Adrenal gland (tissue), 19 donors: ENCODE measurements at regions of chr4 and their contacts with region 1.

Region 1: GRCh38 chr4:25367004-25367621 is 9.9 kb upstream of the ANAPC4 start:
- DNase-seq: no peak
- H3K4me3 ChIP-seq: no peak overlapping the region
- H3K27ac ChIP-seq: peak overlapping the region in 1 of 5 donors; percentile 82
- H3K4me1 ChIP-seq: peaks cover 19 to 25% of the 10 kb centered on the region in 2 donors
- H3K27me3 ChIP-seq: no peaks in the 10 kb centered on the region
- CTCF ChIP-seq: peak; percentile 42 to 77 (median 68)
- POLR2A ChIP-seq: no peak

Region 2: DNA sequence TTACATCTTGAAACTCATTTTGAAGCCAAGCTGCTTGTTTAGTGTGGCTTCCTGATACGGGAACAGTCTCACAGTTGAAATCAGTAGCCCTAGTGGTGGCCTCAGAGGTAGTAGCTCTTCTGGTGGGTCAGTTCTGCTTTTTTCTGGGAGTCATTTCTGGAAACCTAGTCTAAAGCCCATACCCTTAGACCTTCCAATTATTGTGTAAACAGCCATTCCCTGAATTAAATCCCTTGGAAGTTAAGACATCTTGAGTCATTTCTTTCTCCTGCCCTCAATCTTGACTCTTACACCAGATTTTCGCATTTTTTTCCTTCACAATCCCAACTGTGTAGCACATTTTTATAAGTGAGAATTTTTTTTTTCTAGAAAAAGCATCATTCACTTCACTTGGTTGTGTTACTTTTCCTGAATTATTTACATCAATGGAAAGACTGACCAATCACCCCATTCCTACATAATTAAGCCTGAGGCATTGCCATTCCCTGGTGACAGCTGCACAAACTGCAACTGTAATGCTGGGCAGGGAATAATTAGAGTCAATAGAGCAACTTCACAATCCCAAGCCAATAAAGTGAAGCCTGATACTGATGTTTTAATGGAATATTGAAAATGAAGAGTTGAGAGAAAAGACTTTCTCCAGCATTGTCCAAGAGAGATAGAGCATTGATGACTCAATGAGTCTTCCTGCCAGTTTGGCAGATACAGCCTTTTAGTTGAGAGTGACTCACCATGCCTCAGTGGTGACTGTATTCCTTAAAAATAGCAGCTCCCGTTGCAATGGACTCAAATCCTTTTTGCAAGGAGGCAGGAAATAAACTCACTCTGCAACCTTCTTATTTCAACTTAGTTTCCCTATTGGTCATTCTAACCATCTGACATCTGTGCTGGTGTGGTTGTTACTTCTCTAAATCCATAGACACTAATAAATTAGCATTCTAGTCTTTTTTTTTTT is 193.9 kb before region 1 on chr4:
- intact Hi-C with region 1: loop called (anchors 10 kb)
- DNase-seq: peak; percentile 68 to 89 (median 80)
- H3K4me3 ChIP-seq: no peak overlapping the region
- H3K27ac ChIP-seq: peak overlapping the region in 4 of 5 donors; percentile 52 to 83 (median 60)
- H3K4me1 ChIP-seq: peaks cover 12 to 16% of the 10 kb centered on the region in 2 donors
- H3K27me3 ChIP-seq: no peaks in the 10 kb centered on the region
- CTCF ChIP-seq: peak in 3 of 6 experiments; percentile 5 to 22 (median 19)
- POLR2A ChIP-seq: no peak

Region 3: DNA sequence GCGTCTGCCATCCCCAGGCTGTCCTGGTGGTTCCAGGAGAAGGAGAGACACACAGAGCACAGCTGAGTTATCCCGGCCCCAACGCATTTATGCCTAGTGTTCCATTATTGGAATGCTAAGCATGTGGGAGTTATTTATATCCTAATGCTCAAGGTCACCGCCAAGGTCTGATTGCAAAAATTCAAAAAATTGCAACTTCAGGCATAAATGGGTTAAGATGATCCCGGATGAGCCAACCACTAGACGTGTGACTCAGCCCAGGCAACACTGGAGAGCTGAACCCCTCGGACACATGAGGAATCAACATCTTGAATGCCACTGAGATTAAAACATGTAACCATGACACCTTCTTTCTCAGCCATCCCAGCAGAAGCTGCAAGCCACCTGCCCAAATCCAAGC is 58.4 kb before region 1 on chr4:
- intact Hi-C with region 1: loop called in 1 of 2 experiments (anchors 5 kb)
- DNase-seq: no peak
- H3K4me3 ChIP-seq: no peak overlapping the region
- H3K27ac ChIP-seq: no peak overlapping the region
- H3K4me1 ChIP-seq: peaks cover 0 to 6% of the 10 kb centered on the region in 2 donors
- H3K27me3 ChIP-seq: no peaks in the 10 kb centered on the region
- CTCF ChIP-seq: no peak
- POLR2A ChIP-seq: no peak

Region 4: GRCh38 chr4:25509646-25510045 is 142.5 kb after region 1 on chr4:
- intact Hi-C with region 1: no loop called
- DNase-seq: no peak
- H3K4me3 ChIP-seq: no peak overlapping the region
- H3K27ac ChIP-seq: no peak overlapping the region
- H3K4me1 ChIP-seq: no peaks in the 10 kb centered on the region
- H3K27me3 ChIP-seq: no peaks in the 10 kb centered on the region
- CTCF ChIP-seq: no peak
- POLR2A ChIP-seq: no peak